ENCODE measurements at regions of chr12 and their contacts with region 1.

Region 1: DNA sequence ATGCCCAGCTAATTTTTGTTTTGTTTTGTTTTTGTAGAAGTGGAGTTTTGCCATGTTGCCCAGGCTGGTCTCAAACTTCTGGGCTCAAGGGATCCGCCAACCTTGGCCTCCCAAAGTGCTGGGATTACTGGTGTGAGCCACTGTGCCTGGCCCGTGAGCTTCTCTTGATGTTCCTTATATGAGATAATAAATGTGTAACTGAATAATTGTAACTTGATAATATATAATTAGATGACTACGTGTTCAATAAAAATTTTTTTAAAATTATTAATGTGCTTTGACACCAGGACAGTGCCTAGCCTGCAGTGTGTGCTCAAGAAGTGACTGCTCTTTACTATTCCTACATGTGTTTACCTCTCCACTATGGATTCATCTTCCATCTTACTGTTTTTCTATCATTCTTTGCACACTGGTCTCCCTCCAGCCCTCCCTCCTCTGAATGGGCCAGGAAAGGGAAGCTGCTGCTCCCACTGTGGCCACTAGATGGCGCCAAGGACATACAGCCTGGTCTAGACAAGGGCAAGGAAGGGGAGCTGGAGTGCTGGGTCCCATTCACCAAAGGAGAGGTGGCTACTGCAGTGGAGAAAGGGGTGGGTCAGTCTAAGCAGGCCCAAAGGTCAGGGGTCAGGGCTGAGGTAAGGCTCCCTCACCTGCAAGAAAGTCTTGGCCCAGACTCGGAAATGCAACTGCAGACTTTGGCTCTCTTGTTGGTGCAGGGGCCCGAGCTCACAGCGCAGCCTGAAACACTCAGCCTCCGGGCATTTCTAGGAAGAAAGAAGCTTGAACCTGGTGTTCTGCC is 14.7 kb upstream of the ZNF385A start:
- DNase-seq: peak; percentile 88
- H3K4me3 Mint-ChIP-seq: no peak overlapping the region
- H3K27ac Mint-ChIP-seq: no peak overlapping the region
- H3K4me1 Mint-ChIP-seq: peaks cover 13% of the 10 kb centered on the region
- H3K27me3 Mint-ChIP-seq: no peaks in the 10 kb centered on the region
- CTCF ChIP-seq: peak; percentile 91

Region 2: DNA sequence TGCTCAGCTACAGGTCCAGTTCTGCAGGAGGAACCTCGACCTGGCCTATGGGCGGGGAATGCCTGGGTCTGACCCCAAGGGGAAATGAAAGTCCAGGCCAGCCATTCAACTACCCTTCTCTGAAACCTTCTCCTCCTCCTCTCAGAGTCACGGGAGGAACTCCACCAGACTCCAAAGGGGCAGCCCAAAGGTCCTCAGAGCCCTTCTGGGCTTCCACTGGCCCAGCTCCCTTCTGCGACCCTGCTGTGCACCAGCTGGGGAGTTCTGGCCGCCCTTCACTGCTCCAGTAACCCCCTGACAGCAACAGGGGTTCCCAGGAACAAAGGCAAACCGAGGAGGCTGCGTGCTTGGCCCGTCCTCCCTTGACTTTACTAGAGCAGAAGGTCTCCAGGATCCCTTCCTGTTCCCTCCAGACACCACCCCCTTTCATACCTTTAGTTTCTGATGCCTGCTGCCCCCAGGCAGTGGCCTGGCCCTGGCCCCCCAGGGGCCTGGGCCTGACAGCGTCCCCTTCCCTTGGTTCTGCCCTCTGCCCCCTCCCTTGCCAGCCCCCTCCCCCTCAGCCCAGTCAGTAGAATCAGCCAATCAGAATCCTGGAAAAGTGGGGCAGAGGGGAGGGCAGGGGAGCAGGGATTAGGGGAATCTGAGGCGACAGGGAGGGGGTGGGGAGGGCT is 13.8 kb before region 1 on chr12:
- CTCF ChIA-PET with region 1: interaction called, 120 read pairs
- POLR2A ChIA-PET with region 1: no interaction called
- intact Hi-C with region 1: no loop called
- DNase-seq: no peak
- H3K4me3 Mint-ChIP-seq: no peak overlapping the region
- H3K27ac Mint-ChIP-seq: no peak overlapping the region
- H3K4me1 Mint-ChIP-seq: peaks cover 36% of the 10 kb centered on the region
- H3K27me3 Mint-ChIP-seq: no peaks in the 10 kb centered on the region
- CTCF ChIP-seq: no peak

Region 3: DNA sequence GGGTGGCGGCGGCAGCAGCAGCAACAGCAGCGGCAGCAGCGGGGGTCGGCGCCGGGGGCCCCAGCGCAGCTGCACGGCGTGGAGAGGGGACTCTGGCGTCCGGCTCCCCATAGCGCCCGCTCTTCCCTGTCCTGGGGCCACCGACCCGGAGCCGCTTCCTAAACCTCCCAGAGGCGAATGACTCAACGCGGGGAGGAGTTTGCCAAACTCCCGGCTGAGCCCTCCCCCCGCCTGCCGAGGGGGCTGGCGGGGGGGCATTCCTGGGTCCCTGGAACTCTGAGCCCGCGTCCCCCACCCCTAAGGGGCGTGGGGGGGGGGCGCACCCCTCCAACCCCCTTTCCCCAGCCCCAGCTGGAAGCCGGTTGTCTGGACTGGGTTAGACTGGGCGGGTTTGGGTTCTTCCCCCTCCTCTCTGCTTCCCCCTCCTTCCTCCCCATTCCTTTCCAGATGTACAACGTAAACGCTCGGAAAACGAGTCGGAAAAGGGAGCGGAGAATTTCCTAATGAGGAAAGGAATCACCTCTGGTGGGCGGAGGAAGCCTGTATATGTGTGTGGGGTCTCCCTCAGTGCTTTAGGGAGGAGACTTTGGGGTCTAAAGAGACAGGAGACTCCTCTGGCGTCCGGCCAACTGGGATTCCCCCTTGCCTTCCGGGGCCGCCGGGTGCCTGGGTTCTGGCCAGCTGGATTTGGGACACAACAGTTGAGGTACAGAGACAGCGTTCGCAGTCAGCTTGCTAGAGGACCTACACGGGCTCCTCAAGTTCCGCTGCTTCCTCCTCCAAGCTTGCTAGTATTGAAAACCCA is 20.1 kb after region 1 on chr12 and contains the start of gene ITGA5:
- CTCF ChIA-PET with region 1: interaction called, 316 read pairs
- POLR2A ChIA-PET with region 1: interaction called, 4 read pairs
- intact Hi-C with region 1: no loop called
- DNase-seq: peak; percentile 86
- H3K4me3 Mint-ChIP-seq: peak within 1 kb of the TSS; percentile 94
- H3K27ac Mint-ChIP-seq: peak within 1 kb of the TSS; percentile 93
- H3K4me1 Mint-ChIP-seq: peaks cover 55% of the 10 kb centered on the region
- H3K27me3 Mint-ChIP-seq: no peaks in the 10 kb centered on the region
- CTCF ChIP-seq: no peak
- total RNA-seq, gene ITGA5: 110 and 184 TPM in 2 replicates

Region 4: DNA sequence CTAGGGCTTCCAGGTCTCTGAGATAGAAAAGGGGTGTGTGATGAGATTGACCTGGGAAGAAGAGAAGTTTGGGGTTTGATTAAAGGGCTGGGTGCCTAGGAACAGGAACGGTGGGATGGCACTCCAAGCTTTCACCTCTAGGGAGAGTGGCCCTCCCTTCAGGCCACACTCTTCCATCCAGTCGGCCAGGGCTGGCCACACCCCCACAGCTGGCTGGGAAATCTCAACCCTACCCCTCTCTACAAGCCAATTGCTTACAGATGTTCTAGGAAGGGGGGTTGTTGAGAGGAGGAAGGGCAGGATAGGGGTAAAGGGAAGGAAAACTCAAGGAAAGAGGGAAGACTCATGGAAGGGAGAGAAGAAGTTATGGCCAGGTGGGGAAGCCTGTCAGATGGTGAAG is 26.5 kb after region 1 on chr12:
- CTCF ChIA-PET with region 1: interaction called, 982 read pairs
- POLR2A ChIA-PET with region 1: no interaction called
- intact Hi-C with region 1: no loop called
- DNase-seq: no peak
- H3K4me3 Mint-ChIP-seq: no peak overlapping the region
- H3K27ac Mint-ChIP-seq: no peak overlapping the region
- H3K4me1 Mint-ChIP-seq: peaks cover 71% of the 10 kb centered on the region
- H3K27me3 Mint-ChIP-seq: no peaks in the 10 kb centered on the region
- CTCF ChIP-seq: no peak

Region 5: GRCh38 chr12:54431911-54432814 is 33.0 kb after region 1 on chr12:
- CTCF ChIA-PET with region 1: interaction called, 982 read pairs
- POLR2A ChIA-PET with region 1: interaction called, 52 read pairs
- intact Hi-C with region 1: no loop called
- DNase-seq: peak; percentile 97
- H3K4me3 Mint-ChIP-seq: peak overlapping the region; percentile 56
- H3K27ac Mint-ChIP-seq: peak overlapping the region; percentile 83
- H3K4me1 Mint-ChIP-seq: peaks cover 55% of the 10 kb centered on the region
- H3K27me3 Mint-ChIP-seq: no peaks in the 10 kb centered on the region
- CTCF ChIP-seq: no peak

Region 6: GRCh38 chr12:54439521-54440255 is 40.5 kb after region 1 on chr12:
- CTCF ChIA-PET with region 1: interaction called, 982 read pairs
- POLR2A ChIA-PET with region 1: interaction called, 52 read pairs
- intact Hi-C with region 1: loop called (anchors 1 kb)
- DNase-seq: peak; percentile 73
- H3K4me3 Mint-ChIP-seq: no peak overlapping the region
- H3K27ac Mint-ChIP-seq: peak overlapping the region; percentile 22
- H3K4me1 Mint-ChIP-seq: peaks cover 13% of the 10 kb centered on the region
- H3K27me3 Mint-ChIP-seq: no peaks in the 10 kb centered on the region
- CTCF ChIP-seq: peak; percentile 91

Region 7: GRCh38 chr12:54463034-54463433 is 63.8 kb after region 1 on chr12:
- CTCF ChIA-PET with region 1: interaction called, 982 read pairs
- POLR2A ChIA-PET with region 1: no interaction called
- intact Hi-C with region 1: no loop called
- DNase-seq: peak; percentile 92
- H3K4me3 Mint-ChIP-seq: no peak overlapping the region
- H3K27ac Mint-ChIP-seq: no peak overlapping the region
- H3K4me1 Mint-ChIP-seq: peaks cover 6% of the 10 kb centered on the region
- H3K27me3 Mint-ChIP-seq: no peaks in the 10 kb centered on the region
- CTCF ChIP-seq: no peak